ENCODE measurements at regions of chr21 and their contacts with region 1.

Region 1: GRCh38 chr21:31731802-31732596 is at the start of gene SCAF4:
- DNase-seq: peak; percentile 91
- H3K4me3 ChIP-seq: peak within 1 kb of the TSS; percentile 85
- H3K27ac ChIP-seq: peak within 1 kb of the TSS; percentile 90
- H3K4me1 ChIP-seq: peaks cover 55% of the 10 kb centered on the region
- CTCF ChIP-seq: no peak
- total RNA-seq, gene SCAF4: 22.5 and 25.9 TPM in 2 replicates

Region 2: DNA sequence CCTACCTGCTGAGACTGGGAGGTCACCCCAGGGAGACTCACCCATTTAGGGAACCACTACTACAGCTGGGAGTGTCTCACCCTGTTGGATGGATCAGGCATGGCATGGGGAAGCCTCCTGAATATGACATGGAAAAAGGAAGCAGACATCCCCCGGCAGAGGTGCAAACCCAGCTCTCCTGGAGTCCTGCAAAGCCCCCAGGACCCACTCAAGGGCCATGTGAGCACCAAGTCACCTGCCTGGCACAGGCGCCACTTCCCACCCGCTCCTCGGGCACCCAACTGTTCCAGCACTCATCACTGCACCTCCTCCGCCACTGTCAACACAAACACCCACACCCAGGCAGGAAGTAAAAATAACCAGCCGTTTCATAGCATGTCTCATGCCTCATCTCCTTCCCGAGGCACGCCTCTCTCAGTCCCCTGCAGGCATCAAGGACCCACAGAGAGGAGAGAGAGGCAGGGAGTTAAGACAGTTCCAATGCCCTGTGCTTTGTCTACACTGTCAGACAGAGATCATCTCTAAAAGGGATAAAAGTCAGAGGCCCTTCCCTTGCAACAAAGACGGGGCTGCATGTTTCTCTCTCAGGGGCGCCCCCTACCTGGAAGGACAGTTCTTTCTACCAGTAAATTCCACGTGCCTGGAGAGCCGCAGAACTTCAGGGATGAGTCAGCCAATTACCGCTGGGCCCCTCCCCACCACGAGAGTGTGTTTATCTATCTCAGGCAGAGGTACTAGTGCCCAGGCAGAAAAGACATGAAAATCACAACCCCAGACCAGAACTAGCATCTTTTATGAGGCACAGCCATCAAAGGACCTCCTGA is 222.6 kb before region 1 on chr21:
- CTCF ChIA-PET with region 1: no interaction called
- POLR2A ChIA-PET with region 1: no interaction called
- intact Hi-C with region 1: no loop called
- DNase-seq: peak; percentile 64
- H3K4me3 ChIP-seq: no peak overlapping the region
- H3K27ac ChIP-seq: peak overlapping the region; percentile 5
- H3K4me1 ChIP-seq: peaks cover 50% of the 10 kb centered on the region
- CTCF ChIP-seq: peak; percentile 86

Region 3: GRCh38 chr21:31659536-31660258 is 72.3 kb before region 1 on chr21 and contains the start of gene SOD1:
- CTCF ChIA-PET with region 1: no interaction called
- POLR2A ChIA-PET with region 1: no interaction called
- intact Hi-C with region 1: loop called (anchors 2 kb)
- DNase-seq: peak; percentile 96
- H3K4me3 ChIP-seq: peak within 1 kb of the TSS; percentile 89
- H3K27ac ChIP-seq: peak within 1 kb of the TSS; percentile 31
- H3K4me1 ChIP-seq: peaks cover 44% of the 10 kb centered on the region
- CTCF ChIP-seq: no peak
- total RNA-seq, gene SOD1: 229 and 316 TPM in 2 replicates

Region 4: DNA sequence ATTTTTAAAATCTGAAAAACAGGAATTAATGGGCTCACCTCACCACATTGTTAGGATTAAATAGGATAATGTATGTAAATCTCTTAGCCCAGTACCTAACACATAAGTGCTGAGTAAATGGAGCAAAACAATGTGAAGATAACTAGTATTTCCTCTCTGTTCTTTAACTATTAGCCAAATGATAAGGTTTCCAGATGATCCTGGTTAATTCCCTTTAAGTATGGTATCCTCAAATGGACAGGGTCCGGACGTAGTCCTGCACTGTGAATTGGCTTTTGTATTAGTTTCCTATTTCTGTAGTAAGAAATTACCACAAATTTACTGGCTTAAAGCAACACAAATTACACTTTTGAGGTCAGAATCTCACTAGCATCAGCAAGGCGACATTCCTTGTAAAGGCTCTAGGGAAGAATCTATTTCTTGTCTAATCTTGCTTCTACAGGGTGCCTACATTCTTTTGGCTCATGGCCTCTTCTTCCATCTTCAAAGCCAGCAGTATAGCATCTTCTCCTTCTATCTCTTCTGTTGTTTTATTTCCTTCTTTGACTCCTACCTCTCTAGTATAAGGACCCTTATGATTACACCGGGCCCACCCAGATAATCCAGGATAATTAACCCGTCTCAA is 17.1 kb before region 1 on chr21:
- CTCF ChIA-PET with region 1: no interaction called
- POLR2A ChIA-PET with region 1: no interaction called
- intact Hi-C with region 1: no loop called
- DNase-seq: no peak
- H3K4me3 ChIP-seq: no peak overlapping the region
- H3K27ac ChIP-seq: no peak overlapping the region
- H3K4me1 ChIP-seq: peaks cover 35% of the 10 kb centered on the region
- CTCF ChIP-seq: no peak

Region 5: DNA sequence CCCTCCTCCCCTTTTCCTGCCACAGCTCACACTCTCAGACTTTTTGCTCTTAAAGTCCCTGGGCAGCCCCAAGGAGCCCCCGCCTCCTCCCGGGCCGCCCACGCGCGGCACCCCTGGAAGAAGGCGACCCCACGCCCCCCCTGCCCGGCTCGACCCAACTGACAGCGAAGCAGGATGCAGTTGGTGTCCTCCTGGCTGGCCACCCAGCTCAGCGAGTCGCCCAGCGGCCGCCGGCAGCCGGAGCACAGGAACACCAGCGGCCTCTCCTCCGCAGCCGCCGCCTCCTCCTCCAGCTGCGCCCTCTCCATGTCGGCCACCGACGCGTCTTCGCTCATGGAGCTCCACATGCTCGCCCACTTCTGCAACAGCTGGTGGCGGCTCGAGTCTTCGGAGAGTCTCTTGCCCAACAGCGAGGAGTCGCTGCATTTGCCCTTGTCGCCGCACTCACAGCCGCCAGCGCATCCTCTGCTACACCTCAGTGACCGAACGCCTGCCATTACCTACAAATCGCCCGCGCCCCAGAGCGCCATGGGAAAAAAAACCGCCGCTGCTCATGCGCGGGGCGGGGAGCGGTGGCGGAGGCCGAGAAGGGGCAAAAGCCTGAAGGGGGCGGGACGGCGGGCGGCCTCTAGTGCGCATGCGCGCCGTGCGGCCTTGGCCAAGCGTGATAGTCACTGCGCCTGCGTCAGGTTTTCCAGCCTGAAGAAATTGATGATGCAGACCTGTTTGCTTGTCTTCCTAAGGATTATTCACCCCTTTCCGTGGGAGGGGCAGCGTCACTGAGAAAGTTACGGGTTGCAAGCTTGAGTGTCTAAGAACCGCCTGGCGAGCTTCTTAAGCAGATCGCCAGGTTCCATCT is 546.7 kb after region 1 on chr21 and contains the start of gene MIS18A:
- CTCF ChIA-PET with region 1: no interaction called
- POLR2A ChIA-PET with region 1: no interaction called
- intact Hi-C with region 1: loop called (anchors 5 kb)
- DNase-seq: peak; percentile 94
- H3K4me3 ChIP-seq: peak within 1 kb of the TSS; percentile 90
- H3K27ac ChIP-seq: peak within 1 kb of the TSS; percentile 80
- H3K4me1 ChIP-seq: peaks cover 23% of the 10 kb centered on the region
- CTCF ChIP-seq: 0 out of 2 replicates have a peak, but pooled peaks have one; percentile 17
- total RNA-seq, gene MIS18A: 25.2 and 31.7 TPM in 2 replicates